ENCODE measurements at regions of chr20 and their contacts with region 1.

Region 1: GRCh38 chr20:33097001-33097400 is 17.6 kb downstream of the BPIFB4 start:
- DNase-seq: no peak
- H3K4me3 ChIP-seq: no peak overlapping the region
- H3K4me3 Mint-ChIP-seq: no peak overlapping the region
- H3K27ac ChIP-seq: no peak overlapping the region
- H3K27ac Mint-ChIP-seq: no peak overlapping the region
- H3K4me1 ChIP-seq: no peaks in the 10 kb centered on the region
- H3K4me1 Mint-ChIP-seq: no peaks in the 10 kb centered on the region
- H3K27me3 ChIP-seq: no peaks in the 10 kb centered on the region
- H3K27me3 Mint-ChIP-seq: peaks cover 2 to 3% (median 2%) of the 10 kb centered on the region in 3 donors
- CTCF ChIP-seq: no peak

Region 2: GRCh38 chr20:32908334-32909292 is 188.4 kb before region 1 on chr20:
- intact Hi-C with region 1: loop called in 1 of 2 experiments (anchors 5 kb)
- DNase-seq: no peak
- H3K4me3 ChIP-seq: no peak overlapping the region
- H3K4me3 Mint-ChIP-seq: no peak overlapping the region
- H3K27ac ChIP-seq: no peak overlapping the region
- H3K27ac Mint-ChIP-seq: peak overlapping the region in 1 of 7 donors; percentile 62
- H3K4me1 ChIP-seq: no peaks in the 10 kb centered on the region
- H3K4me1 Mint-ChIP-seq: no peaks in the 10 kb centered on the region
- H3K27me3 ChIP-seq: no peaks in the 10 kb centered on the region
- H3K27me3 Mint-ChIP-seq: peaks cover 0 to under 1% (median 0%) of the 10 kb centered on the region in 3 donors
- CTCF ChIP-seq: no peak

Region 3: DNA sequence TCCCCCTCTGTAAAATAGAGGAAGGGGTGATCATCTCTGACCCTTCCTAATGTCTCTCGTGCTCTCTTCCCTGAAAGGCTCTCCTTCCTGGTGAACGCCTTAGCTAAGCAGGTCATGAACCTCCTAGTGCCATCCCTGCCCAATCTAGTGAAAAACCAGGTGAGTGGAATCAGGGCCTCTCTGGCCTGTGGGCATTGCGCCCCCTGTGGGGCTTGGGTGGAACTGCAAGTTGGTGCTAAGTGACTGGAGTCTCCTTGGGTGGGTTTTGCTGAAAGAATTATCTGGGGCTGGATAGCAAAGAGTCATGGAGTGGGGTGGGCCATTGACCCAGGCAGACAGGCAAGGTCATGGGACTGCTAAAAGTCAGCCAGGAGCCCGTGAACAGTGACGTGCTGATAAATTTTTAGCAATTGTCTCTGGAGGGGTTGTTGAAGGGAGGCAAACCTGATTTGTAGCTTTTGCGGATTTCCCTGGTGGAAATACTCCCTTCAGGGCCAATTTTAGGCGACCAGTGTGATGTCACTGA is 194.9 kb after region 1 on chr20:
- intact Hi-C with region 1: no loop called
- DNase-seq: peak; percentile 12 to 52 (median 45)
- H3K4me3 ChIP-seq: no peak overlapping the region
- H3K4me3 Mint-ChIP-seq: no peak overlapping the region
- H3K27ac ChIP-seq: no peak overlapping the region
- H3K27ac Mint-ChIP-seq: peak overlapping the region in 1 of 7 donors; percentile 77
- H3K4me1 ChIP-seq: no peaks in the 10 kb centered on the region
- H3K4me1 Mint-ChIP-seq: no peaks in the 10 kb centered on the region
- H3K27me3 ChIP-seq: no peaks in the 10 kb centered on the region
- H3K27me3 Mint-ChIP-seq: peaks cover 3 to 11% (median 5%) of the 10 kb centered on the region in 3 donors
- CTCF ChIP-seq: peak; percentile 100